HCT116 (cell line): ENCODE measurements at regions of chr18 and their contacts with region 1.

Region 1: DNA sequence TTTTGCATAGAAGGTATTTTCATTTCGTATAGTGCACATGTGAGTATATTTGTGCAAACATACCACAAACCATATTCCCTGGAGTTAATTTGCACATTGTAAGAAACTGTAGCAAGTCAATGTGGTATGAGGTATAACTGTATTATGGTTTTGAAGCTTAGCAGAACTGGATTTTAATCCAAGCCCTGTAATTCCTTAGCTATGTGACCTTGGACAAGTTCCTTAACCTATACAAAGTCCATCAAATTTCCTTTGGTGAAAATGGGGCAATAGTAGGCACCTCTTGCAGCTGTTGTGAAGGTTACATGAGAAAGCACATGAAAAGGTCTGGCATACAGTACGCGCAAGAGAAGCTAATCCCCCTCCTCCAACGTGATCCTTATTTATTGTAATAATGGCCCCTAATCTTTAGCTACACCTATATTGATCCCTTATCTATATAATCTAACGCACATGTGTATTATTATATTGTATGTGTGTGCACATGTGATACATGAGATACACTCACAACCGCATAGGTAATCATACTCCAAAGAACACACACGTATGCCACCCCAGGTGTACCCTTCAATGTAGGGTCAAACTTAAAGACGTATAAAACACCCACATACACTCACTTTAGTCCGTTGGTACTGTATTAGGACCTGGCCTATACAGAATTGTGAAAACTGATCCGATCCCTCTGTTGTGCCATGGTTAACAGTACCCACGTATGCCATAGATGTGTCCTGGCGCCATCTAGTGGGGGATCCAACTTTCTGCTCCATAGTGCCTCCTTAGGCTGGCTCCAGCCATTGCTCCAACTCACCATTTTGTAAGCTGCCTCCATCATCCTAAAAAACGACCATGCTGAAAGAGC is 402.9 kb upstream of the SLC14A2 start:
- DNase-seq: peak; percentile 22
- ATAC-seq: peak; percentile 87
- H3K4me3 ChIP-seq: no peak overlapping the region
- H3K27ac ChIP-seq: no peak overlapping the region
- H3K4me1 ChIP-seq: no peaks in the 10 kb centered on the region
- H3K27me3 ChIP-seq: no peaks in the 10 kb centered on the region
- CTCF ChIP-seq: peak; percentile 72 to 80 (median 78)
- POLR2A ChIP-seq: no peak
- RAD21 ChIP-seq: peak; percentile 42

Region 2: DNA sequence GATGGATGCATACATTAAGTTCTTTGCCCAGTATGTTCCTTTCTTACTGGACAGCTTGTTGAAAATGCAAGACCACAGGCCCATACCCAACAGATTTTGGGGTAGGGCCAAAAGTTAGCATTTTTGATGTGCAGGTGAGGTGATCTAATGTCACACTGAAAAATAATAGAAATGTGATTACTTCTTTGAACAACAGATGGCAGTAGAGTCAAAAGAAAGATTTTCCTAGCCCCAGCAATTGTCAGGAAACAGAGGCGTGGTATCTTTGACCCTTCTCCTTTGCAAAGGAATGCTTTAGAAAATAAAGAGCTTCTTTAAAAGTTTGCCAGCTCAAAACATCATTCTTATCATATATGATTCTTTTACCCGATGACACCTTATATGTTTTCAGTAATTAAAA is 1591.5 kb before region 1 on chr18:
- CTCF ChIA-PET with region 1: no interaction called
- POLR2A ChIA-PET with region 1: no interaction called
- RAD21 ChIA-PET with region 1: no interaction called
- intact Hi-C with region 1: loop called (anchors 5 kb)
- DNase-seq: no peak
- ATAC-seq: no peak
- H3K4me3 ChIP-seq: no peak overlapping the region
- H3K27ac ChIP-seq: no peak overlapping the region
- H3K4me1 ChIP-seq: no peaks in the 10 kb centered on the region
- H3K27me3 ChIP-seq: no peaks in the 10 kb centered on the region
- CTCF ChIP-seq: peak in 1 of 3 experiments; percentile 43; a peak in 2 of 6 replicates
- POLR2A ChIP-seq: no peak
- RAD21 ChIP-seq: peak; percentile 37

Region 3: DNA sequence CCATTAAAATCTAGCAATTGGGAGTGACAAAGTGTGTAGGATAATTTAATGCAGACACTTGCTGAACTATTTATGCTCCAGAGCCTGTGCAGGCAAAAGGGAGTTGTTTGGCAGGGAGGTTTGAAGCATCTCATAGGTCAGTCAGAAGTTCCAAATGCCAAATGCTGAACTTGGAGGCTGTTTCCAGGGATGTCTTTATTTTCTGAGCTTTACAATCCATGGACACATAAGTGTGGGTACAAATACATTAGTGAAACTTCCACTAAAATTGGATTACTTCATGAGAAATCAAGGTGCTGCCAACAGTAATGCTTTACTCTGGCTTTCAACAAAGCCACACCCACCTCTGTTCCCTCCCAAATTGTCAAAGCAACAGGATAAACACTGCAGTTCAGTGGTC is 953.8 kb before region 1 on chr18:
- CTCF ChIA-PET with region 1: no interaction called
- POLR2A ChIA-PET with region 1: no interaction called
- RAD21 ChIA-PET with region 1: no interaction called
- intact Hi-C with region 1: no loop called
- DNase-seq: no peak
- ATAC-seq: no peak
- H3K4me3 ChIP-seq: no peak overlapping the region
- H3K27ac ChIP-seq: no peak overlapping the region
- H3K4me1 ChIP-seq: no peaks in the 10 kb centered on the region
- H3K27me3 ChIP-seq: no peaks in the 10 kb centered on the region
- CTCF ChIP-seq: no peak
- POLR2A ChIP-seq: no peak
- RAD21 ChIP-seq: no peak